Motor neuron (in vitro differentiated cells): ENCODE measurements at regions of chr3 and their contacts with region 1.

Region 1: DNA sequence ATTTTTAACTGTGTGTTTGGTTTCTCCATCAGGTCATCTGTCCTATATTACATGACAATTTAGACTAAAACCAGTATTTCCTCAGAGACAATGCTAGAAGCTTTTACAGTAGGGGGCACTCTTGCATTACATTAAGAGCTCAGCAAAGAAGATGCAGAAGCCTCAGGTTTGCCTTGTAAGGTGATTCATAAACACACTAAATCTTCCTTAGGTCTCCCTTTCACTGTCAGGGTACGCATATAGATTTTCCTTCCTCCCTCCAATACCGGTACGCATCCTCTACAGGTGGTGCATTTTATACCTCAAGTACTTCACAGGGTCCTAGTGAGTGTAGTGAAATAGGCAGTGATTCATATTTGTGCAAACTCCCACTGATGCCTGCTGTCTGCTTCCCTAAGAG is 46.5 kb downstream of the CD86 start:
- ATAC-seq: peak in 6 of 8 experiments; percentile 32 to 90 (median 69)
- H3K4me3 ChIP-seq: no peak overlapping the region
- H3K27ac ChIP-seq: no peak overlapping the region
- H3K4me1 ChIP-seq: no peaks in the 10 kb centered on the region

Region 2: DNA sequence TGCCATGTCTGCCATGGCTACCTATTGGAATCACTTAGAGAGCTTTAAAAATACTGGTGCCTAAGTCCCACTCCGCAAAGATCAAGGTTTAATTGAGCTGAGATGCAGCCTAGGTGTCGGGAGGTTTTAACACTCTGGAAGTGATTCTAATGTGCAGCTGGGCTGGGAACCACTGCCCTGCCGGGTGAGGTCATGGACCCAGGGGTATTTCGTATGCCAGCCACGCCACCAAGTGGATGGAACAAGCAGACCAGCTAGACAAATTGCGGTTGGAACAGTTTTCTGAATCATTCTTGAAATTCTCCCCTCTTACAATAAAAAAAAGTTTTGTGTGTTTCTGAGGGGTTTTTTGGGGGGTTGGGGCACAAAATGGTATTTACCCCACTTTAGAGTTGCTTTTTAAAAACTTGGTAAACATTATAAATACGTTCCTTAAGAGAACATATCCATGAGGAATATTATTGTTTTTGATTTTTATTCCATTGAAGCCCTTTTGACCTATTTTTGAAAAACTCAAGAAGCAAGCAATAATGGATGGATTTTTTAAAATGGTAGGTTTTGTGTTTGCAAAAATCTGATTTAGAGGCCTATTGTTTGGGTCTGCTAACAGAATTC is 157.2 kb after region 1 on chr3:
- in situ Hi-C with region 1: loop called in 3 of 9 experiments (anchors 10 kb)
- ATAC-seq: peak; percentile 67 to 98 (median 90)
- H3K4me3 ChIP-seq: no peak overlapping the region
- H3K27ac ChIP-seq: no peak overlapping the region
- H3K4me1 ChIP-seq: no peaks in the 10 kb centered on the region

Region 3: GRCh38 chr3:122268257-122269024 is 166.8 kb after region 1 on chr3:
- in situ Hi-C with region 1: loop called in 1 of 9 experiments (anchors 10 kb)
- ATAC-seq: no peak
- H3K4me3 ChIP-seq: no peak overlapping the region
- H3K27ac ChIP-seq: no peak overlapping the region
- H3K4me1 ChIP-seq: no peaks in the 10 kb centered on the region

Region 4: DNA sequence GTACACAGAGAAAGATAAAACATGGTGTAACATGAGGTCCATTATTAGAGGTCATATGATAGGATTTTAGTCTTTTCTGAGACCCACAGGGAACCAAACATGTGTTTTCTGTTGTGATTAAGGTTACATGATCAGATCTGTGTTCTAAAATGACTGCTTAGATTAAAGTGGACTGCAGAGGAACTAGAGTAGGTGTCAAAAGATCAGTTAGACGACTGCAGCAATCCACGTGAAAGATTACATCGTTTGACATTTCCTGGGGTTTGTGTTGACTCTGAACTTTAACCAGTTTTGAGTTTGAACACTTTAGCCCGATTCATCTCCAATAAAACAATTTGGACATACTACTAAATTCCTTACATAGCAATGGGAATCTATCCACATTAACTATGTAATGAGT is 276.3 kb after region 1 on chr3:
- in situ Hi-C with region 1: loop called in 1 of 9 experiments (anchors 10 kb)
- ATAC-seq: no peak
- H3K4me3 ChIP-seq: no peak overlapping the region
- H3K27ac ChIP-seq: no peak overlapping the region
- H3K4me1 ChIP-seq: peaks cover 4 to 6% of the 10 kb centered on the region in 2 donors

Region 5: GRCh38 chr3:122514123-122515019 is 412.7 kb after region 1 on chr3 and contains the start of gene KPNA1:
- in situ Hi-C with region 1: no loop called
- ATAC-seq: peak; percentile 84 to 93 (median 91)
- H3K4me3 ChIP-seq: peak within 1 kb of the TSS; percentile 59 to 93 (median 81)
- H3K27ac ChIP-seq: peak within 1 kb of the TSS; percentile 93
- H3K4me1 ChIP-seq: peaks cover 6 to 15% of the 10 kb centered on the region in 2 donors
- total RNA-seq, gene KPNA1: 24.1 to 48.9 (median 36.2) TPM